Aorta (tissue), 5 donors: ENCODE measurements at regions of chr18 and their contacts with region 1.

Region 1: DNA sequence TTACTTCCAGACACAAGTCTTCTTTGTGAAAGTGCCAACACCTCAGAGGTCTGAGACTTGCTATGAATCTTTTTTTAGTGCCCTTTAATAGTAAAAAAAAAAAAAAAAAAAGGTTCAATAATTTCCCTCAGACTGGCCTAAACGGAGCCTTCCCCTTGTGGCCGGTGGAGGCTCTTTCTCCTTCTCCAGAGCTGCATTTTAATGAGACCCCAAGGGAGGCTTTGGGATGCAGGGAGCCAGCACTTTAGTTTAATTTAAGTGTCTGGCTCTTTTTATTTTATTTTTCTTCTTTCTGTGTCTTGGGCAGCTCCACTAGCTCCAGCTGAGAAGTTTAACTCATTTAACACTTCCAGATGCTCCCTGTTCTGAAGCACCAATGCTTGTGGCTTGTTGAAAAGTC is 67.8 kb upstream of the MAPK4 start:
- DNase-seq: no peak
- ATAC-seq: no peak
- H3K4me3 ChIP-seq: no peak overlapping the region
- H3K27ac ChIP-seq: no peak overlapping the region
- H3K4me1 ChIP-seq: no peaks in the 10 kb centered on the region
- H3K27me3 ChIP-seq: no peaks in the 10 kb centered on the region

Region 2: DNA sequence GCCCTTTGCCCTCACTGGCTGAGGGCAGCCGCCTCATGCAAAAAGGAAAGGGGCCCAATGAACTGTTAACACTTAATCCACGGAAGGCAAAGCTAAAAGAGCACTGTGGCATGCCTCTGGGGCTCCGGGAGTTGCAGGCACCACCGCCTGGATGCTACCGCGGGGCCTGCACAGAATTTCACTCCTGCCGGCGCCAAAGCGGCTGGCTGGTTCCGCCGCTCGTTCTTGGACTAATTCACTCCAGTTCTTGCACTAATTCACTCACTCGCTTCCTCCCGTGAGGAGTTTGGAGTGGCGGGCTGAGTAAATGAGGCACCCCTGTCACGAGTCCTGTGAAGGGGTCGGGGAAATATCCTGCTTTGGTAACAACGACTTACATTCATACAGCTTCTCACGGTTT is 53.8 kb after region 1 on chr18:
- intact Hi-C with region 1: loop called in 1 of 2 experiments (anchors 10 kb)
- DNase-seq: no peak
- ATAC-seq: no peak
- H3K4me3 ChIP-seq: no peak overlapping the region
- H3K27ac ChIP-seq: no peak overlapping the region
- H3K4me1 ChIP-seq: no peaks in the 10 kb centered on the region
- H3K27me3 ChIP-seq: peaks cover 0 to 2% of the 10 kb centered on the region in 2 donors

Region 3: GRCh38 chr18:50696436-50696835 is 204.3 kb after region 1 on chr18:
- intact Hi-C with region 1: no loop called
- DNase-seq: no peak
- ATAC-seq: no peak
- H3K4me3 ChIP-seq: no peak overlapping the region
- H3K27ac ChIP-seq: no peak overlapping the region
- H3K4me1 ChIP-seq: no peaks in the 10 kb centered on the region
- H3K27me3 ChIP-seq: no peaks in the 10 kb centered on the region